ENCODE measurements at regions of chr15 and their contacts with region 1.

Region 1: DNA sequence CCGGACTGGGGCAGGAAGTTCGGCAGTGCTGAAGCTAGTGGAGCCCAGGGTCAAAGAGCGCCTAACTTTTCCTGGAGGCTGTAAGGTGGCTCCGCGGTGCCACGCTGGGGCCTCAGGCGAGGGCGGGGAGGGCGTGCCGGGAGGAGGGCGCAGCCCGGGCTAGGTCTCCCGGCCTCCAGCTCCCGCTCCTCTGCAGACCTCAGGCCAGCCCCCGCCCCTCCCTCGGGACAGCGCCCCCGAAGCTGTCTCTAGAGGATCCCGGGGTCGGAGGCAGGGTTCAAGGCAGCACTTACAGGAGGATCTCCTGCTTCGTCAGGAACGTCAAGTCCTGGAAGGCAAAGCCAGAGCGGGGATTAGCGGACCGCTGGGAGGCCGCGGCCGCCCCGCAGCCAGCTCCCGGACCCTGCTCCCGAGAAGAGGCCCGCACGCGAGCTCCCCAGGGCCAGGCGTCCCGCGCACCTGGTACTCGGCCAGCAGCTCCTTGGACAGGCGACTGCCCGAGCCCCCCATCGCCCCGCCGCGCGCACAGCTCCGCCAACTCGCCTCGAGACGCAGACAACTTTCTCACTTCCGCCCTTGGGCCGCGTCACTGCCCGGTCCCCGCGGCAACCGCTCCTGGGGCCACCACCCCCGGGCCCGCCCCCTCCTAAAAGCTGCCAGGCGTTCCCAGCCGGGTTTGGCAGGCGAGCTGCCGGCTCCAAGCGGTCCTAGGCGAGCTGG is at the start of gene CIB1:
- DNase-seq: peak; percentile 99
- CTCF ChIP-seq: peak; percentile 31

Region 2: DNA sequence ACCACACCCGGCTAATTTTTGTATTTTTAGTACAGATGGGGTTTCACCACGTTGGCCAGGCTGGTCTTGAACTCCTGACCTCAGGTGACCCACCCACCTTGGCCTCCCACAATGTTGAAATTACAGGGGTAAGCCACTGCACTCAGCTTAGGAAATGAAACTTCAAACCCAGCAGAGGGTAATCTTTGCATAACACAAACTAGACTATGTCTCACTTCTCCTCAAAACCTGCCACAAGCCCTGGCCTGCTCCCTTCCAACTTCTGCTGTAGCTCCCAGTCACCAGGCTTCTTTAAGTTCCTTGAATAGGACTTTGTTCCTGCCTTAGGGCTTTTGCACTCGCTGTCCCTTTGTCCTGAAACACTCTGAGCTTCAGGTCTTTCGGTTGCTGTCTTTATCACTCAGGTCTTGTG is 71.6 kb before region 1 on chr15:
- CTCF ChIA-PET with region 1: interaction called, 14 read pairs
- POLR2A ChIA-PET with region 1: no interaction called
- DNase-seq: no peak
- CTCF ChIP-seq: no peak

Region 3: DNA sequence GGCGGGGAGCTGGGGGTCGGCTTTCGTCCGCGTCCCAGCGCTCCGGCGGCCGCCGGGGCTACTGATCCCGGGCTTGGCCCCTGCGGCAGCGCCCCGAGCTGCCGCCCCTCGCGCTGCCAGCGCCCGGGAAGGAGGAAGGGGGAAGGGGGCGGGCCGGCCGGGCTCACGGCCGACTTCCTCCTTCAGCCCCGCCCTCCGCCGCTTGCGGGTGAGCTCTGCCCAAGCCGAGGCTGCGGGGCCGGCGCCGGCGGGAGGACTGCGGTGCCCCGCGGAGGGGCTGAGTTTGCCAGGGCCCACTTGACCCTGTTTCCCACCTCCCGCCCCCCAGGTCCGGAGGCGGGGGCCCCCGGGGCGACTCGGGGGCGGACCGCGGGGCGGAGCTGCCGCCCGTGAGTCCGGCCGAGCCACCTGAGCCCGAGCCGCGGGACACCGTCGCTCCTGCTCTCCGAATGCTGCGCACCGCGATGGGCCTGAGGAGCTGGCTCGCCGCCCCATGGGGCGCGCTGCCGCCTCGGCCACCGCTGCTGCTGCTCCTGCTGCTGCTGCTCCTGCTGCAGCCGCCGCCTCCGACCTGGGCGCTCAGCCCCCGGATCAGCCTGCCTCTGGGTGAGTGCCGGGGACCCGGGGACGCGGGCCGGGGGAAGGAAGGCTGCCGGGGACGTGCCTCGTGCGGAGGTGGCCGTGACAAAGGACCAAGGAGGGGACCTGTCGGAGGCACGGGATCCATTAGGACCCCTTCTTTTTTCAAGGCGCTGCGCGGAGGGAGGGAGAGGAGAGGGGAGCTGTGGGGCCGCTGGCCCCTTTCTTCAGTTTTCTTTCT is 32.2 kb before region 1 on chr15 and contains the start of gene SEMA4B:
- CTCF ChIA-PET with region 1: interaction called, 21 read pairs
- POLR2A ChIA-PET with region 1: interaction called, 7 read pairs
- DNase-seq: peak; percentile 92
- CTCF ChIP-seq: no peak

Region 4: GRCh38 chr15:90529371-90530249 is 296.1 kb after region 1 on chr15 and contains the start of gene CRTC3:
- CTCF ChIA-PET with region 1: no interaction called
- POLR2A ChIA-PET with region 1: no interaction called
- DNase-seq: peak; percentile 89
- CTCF ChIP-seq: no peak

Region 5: DNA sequence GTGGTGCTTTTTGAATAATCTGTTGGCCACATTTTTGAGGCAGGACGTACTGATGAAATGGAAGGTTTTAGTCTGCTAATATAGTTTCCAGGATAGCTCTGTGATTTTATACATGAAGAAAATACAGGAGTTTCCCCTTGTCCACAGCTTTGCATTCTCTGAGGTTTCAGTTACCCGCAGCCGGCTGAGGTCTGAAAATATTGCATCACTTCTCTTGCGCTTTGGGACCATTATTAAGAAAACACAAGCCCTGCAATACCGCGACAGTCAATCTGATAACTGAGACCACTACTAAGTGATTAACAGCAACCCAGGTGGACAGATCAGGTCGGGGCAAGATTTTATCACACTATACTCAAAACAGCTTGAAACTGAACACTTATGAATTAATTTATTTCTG is 516.6 kb after region 1 on chr15:
- CTCF ChIA-PET with region 1: no interaction called
- POLR2A ChIA-PET with region 1: no interaction called
- DNase-seq: no peak
- CTCF ChIP-seq: no peak